ENCODE measurements at regions of chr13 and their contacts with region 1.

Region 1: GRCh38 chr13:51704399-51705313 is 99.3 kb downstream of the DHRS12 start:
- DNase-seq: no peak
- H3K4me3 ChIP-seq: no peak overlapping the region
- H3K27ac ChIP-seq: no peak overlapping the region
- H3K27me3 ChIP-seq: no peaks in the 10 kb centered on the region
- CTCF ChIP-seq: no peak

Region 2: GRCh38 chr13:51222037-51222685 is 482.5 kb before region 1 on chr13 and contains the start of gene FAM124A:
- CTCF ChIA-PET with region 1: interaction called, 10 read pairs
- POLR2A ChIA-PET with region 1: no interaction called
- DNase-seq: no peak
- H3K4me3 ChIP-seq: peak within 1 kb of the TSS; percentile 69
- H3K27ac ChIP-seq: no peak within 1 kb of the TSS
- H3K27me3 ChIP-seq: peaks cover 48% of the 10 kb centered on the region
- CTCF ChIP-seq: peak; percentile 12; the same call in 1 of the 2 replicates
- polyA plus RNA-seq, gene FAM124A: 0.06 and 0.14 TPM in 2 replicates

Measured in AG04450 (cell line).